ENCODE measurements at regions of chr7 and their contacts with region 1.

Region 1: GRCh38 chr7:55086413-55087201 is 67.8 kb downstream of the EGFR start:
- DNase-seq: no peak
- ATAC-seq: peak; percentile 66 to 71
- H3K4me3 ChIP-seq: peak overlapping the region; percentile 25
- H3K27ac ChIP-seq: peak overlapping the region; percentile 75
- H3K4me1 ChIP-seq: peaks cover 40% of the 10 kb centered on the region
- H3K27me3 ChIP-seq: no peaks in the 10 kb centered on the region
- CTCF ChIP-seq: no peak

Region 2: GRCh38 chr7:55129531-55130394 is 43.2 kb after region 1 on chr7:
- intact Hi-C with region 1: loop called (anchors 5 kb)
- DNase-seq: no peak
- ATAC-seq: peak in 1 of 2 donors; percentile 3
- H3K4me3 ChIP-seq: no peak overlapping the region
- H3K27ac ChIP-seq: peak overlapping the region; percentile 70
- H3K4me1 ChIP-seq: peaks cover 98% of the 10 kb centered on the region
- H3K27me3 ChIP-seq: no peaks in the 10 kb centered on the region
- CTCF ChIP-seq: no peak

Measured in lower lobe of right lung (tissue), 2 donors.